BJ (cell line): ENCODE measurements at regions of chr7 and their contacts with region 1.

Region 1: GRCh38 chr7:39580149-39580874 is 14.1 kb downstream of the YAE1 start:
- DNase-seq: peak; percentile 50
- H3K4me3 ChIP-seq: no peak overlapping the region
- H3K27me3 ChIP-seq: no peaks in the 10 kb centered on the region
- CTCF ChIP-seq: peak; percentile 75

Region 2: GRCh38 chr7:39560408-39560807 is 19.9 kb before region 1 on chr7:
- CTCF ChIA-PET with region 1: no interaction called
- POLR2A ChIA-PET with region 1: no interaction called
- DNase-seq: no peak
- H3K4me3 ChIP-seq: no peak overlapping the region
- H3K27me3 ChIP-seq: no peaks in the 10 kb centered on the region
- CTCF ChIP-seq: no peak

Region 3: DNA sequence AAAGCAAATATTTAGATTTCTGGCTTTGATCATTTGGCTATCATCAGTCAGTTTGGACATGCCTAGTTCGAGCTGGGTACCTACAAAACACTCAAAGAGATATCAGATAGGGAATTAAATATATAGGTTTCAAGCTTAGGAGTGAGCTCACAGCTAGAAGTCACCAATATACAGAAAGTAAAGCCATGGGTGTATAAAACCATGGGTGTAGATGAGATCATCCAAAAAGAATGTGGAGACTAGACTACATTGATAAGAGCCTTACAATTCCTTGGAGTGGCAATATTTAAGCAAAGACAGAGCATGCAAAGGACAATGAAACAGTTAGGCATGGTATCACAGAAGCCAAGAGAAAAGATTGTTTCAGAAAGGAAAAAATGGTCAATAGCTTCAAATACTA is 35.8 kb after region 1 on chr7:
- CTCF ChIA-PET with region 1: interaction called, 12 read pairs
- POLR2A ChIA-PET with region 1: no interaction called
- DNase-seq: no peak
- H3K4me3 ChIP-seq: no peak overlapping the region
- H3K27me3 ChIP-seq: no peaks in the 10 kb centered on the region
- CTCF ChIP-seq: no peak

Region 4: GRCh38 chr7:39623018-39623731 is 42.9 kb after region 1 on chr7 and contains the start of gene RALA:
- CTCF ChIA-PET with region 1: interaction called, 10 read pairs
- POLR2A ChIA-PET with region 1: interaction called, 4 read pairs
- DNase-seq: peak; percentile 71
- H3K4me3 ChIP-seq: peak within 1 kb of the TSS; percentile 95
- H3K27me3 ChIP-seq: no peaks in the 10 kb centered on the region
- CTCF ChIP-seq: 0 out of 2 replicates have a peak, but pooled peaks have one; percentile 7
- polyA plus RNA-seq, gene RALA: 14.9 and 27.9 TPM in 2 replicates

Region 5: DNA sequence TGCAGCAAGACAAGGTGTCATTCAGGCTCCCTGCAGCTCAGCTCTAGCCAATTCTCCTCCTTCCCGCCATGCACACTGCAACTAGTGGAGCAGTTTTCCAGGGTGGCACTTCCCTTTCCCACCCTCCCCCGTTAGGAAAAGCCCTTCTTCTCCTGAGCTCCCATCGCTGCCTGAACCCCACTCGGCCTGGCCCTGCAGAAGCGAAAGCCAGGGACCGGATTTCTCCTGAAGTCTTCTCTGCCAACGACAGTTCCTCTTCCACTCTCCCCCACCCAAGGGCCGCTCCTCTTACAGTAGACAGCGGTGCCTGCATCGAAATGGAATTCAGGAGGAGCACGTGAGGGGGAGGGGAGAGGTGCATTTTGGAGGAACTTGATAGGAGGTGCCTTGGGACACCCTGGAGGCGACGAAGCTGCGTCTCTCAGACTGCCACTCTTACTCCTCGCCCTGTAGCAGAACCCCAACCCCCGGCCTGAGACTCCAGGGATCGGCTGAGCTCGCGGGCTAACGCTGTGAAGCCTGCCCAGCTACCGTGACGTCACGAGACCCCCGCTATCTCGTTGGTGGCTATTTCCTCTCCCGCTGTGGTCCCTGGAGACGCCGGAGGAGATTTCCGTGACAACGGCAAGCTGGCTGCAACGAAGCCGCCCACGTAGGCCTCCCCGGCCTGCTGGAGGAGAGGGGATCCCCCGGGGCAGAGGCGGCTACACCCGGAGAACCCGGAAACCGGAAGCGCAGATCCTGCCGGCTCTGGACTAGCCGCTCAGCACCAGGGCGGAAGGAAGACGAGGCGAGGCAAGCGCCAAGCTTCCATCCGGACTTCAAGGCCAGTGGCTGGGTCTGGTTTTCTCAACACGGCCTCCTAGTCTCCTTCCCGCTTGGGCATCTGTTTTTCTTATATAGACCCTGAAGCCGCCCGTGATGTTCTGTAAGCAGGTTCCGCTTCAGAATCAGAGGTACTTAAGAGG is 152.8 kb after region 1 on chr7:
- CTCF ChIA-PET with region 1: interaction called, 37 read pairs
- POLR2A ChIA-PET with region 1: no interaction called
- DNase-seq: peak; percentile 87
- H3K4me3 ChIP-seq: peak overlapping the region; percentile 52
- H3K27me3 ChIP-seq: no peaks in the 10 kb centered on the region
- CTCF ChIP-seq: no peak

Region 6: GRCh38 chr7:39746103-39746819 is 165.9 kb after region 1 on chr7:
- CTCF ChIA-PET with region 1: interaction called, 287 read pairs
- POLR2A ChIA-PET with region 1: interaction called, 6 read pairs
- DNase-seq: no peak
- H3K4me3 ChIP-seq: no peak overlapping the region
- H3K27me3 ChIP-seq: no peaks in the 10 kb centered on the region
- CTCF ChIP-seq: peak; percentile 83